BJ (cell line): ENCODE measurements at regions of chr2 and their contacts with region 1.

Region 1: GRCh38 chr2:26330113-26330549 is 15.8 kb upstream of the SELENOI start:
- DNase-seq: peak; percentile 87
- H3K4me3 ChIP-seq: no peak overlapping the region
- H3K27me3 ChIP-seq: no peaks in the 10 kb centered on the region
- CTCF ChIP-seq: peak; percentile 92

Region 2: DNA sequence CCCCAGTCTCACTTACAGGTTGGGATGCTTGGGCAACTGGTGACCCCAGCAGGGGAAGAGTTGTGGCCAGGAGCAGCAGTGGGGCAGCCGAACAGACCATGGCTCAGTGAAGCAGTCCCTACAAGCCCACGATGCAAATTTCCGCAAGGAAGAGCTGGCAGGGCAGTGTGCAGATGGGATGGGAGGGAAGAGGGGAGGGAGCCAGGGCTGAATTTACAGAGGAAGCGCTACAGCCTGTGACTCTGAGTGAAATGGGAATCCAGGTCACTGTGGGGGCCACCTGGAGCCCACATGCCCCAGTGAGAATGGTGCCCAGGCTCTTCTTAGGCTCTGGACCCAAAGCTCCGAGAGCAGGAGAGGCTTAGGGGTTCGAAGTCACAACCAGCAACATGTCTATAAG is 11.2 kb before region 1 on chr2:
- CTCF ChIA-PET with region 1: interaction called, 14 read pairs
- POLR2A ChIA-PET with region 1: interaction called, 7 read pairs
- DNase-seq: no peak
- H3K4me3 ChIP-seq: no peak overlapping the region
- H3K27me3 ChIP-seq: peaks cover 13% of the 10 kb centered on the region
- CTCF ChIP-seq: no peak

Region 3: GRCh38 chr2:26345545-26346453 is 15.7 kb after region 1 on chr2 and contains the start of gene SELENOI:
- CTCF ChIA-PET with region 1: interaction called, 8 read pairs
- POLR2A ChIA-PET with region 1: interaction called, 13 read pairs
- DNase-seq: peak; percentile 93
- H3K4me3 ChIP-seq: peak within 1 kb of the TSS; percentile 84
- H3K27me3 ChIP-seq: no peaks in the 10 kb centered on the region
- CTCF ChIP-seq: no peak
- polyA plus RNA-seq, gene SELENOI: 9.5 and 11.1 TPM in 2 replicates